ENCODE measurements at regions of chr22 and their contacts with region 1.

Region 1: DNA sequence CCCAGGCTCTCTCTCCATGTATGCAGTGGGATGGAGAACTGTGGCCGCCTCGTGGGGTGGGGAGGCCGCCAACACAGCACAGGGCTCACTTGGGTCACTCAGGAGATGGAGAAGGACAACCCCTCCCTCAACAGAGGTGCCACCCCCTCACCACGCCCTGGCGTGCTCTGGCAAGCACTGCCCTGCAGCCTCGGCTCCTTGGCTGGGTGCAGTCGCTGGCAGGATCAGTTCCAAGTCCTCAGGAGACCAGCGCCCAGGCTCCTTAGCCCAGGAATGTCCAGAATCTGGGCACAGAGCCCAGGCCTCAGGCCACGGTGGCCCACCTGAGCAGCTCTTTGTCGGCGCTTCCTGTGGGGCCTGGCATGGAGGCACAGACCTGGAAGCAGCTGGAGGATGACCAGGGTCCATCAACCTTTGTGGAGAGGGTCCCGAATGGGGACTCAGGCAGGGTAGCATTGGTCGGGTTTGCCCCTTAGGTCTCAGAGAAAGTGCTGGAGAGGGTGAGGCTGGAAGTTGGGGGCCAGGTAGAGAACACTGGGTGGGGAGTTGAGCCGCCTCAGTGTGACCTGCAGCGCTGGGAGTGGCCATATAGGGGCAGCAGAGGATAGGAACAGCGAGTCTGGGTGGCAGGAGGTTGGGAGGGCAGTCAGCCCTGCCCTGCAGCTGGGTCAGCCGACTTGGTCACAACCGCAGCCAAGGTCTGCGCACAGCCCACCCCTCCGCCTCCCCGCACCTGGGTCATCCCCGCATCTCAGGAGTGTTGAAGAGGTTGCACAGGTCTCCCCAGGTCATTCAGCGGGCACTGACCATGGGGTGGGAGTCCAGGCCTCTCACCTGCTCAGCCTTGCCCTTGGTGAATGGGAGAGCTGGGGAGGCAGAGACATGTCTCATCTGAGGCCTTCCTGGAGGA is 8.2 kb downstream of the SUSD2 start:
- DNase-seq: no peak
- ATAC-seq: peak; percentile 90
- H3K4me3 ChIP-seq: no peak overlapping the region
- H3K27ac ChIP-seq: peak overlapping the region; percentile 66
- H3K4me1 ChIP-seq: peaks cover 16% of the 10 kb centered on the region
- H3K27me3 ChIP-seq: no peaks in the 10 kb centered on the region
- CTCF ChIP-seq: peak; percentile 88

Region 2: DNA sequence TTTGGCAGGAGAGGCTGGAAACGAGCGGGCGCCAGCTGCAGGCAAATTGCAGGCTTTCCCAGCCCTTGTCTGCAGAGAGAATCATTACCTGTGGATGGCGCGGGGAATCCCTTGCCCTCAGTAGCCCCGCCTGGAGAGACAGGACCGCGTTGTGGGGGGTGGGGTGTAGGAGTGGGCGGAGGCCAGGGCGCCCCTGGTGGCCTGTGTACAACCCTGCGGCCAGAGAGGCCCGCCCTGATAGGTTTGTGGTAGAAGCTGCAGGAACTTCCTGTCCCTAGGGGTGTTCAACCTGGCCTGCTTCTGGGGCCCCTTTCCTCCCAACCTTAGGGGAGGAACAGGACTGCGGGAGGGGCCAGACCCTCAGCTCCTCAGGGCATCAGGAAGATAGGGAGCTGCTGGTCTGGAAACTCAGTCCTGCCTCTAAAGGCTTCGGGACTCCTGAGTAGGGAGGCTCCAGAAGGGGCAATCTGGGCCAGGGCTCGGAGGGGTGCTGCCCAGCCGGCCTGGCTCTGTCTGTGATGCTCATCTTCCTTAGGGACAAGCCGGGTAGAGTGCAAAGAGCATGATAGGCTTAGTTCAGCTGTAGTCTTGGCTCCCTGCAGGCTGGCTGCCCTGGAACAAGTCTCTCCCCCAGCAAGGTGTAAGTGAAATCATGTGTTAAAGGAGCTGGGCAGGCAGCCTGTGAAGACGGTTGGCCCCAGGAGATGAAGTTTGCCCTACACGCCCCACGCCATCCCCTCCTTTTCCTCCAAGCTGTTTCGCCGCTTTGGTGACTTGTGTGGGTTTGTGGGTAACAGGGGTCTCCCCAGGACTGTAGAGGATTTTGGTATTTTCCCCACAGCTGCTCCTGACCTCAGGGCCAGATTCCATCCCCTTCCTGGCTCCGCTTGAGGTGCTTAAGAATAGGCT is 32.3 kb before region 1 on chr22:
- CTCF ChIA-PET with region 1: no interaction called
- POLR2A ChIA-PET with region 1: no interaction called
- in situ Hi-C with region 1: no loop called
- intact Hi-C with region 1: no loop called
- DNase-seq: no peak
- ATAC-seq: peak; percentile 91
- H3K4me3 ChIP-seq: peak overlapping the region; percentile 59 to 71
- H3K27ac ChIP-seq: peak overlapping the region; percentile 77
- H3K4me1 ChIP-seq: peaks cover 26% of the 10 kb centered on the region
- H3K27me3 ChIP-seq: no peaks in the 10 kb centered on the region
- CTCF ChIP-seq: peak; percentile 88

Region 3: GRCh38 chr22:24225951-24226350 is 36.4 kb after region 1 on chr22:
- CTCF ChIA-PET with region 1: interaction called, 10 read pairs
- POLR2A ChIA-PET with region 1: no interaction called
- in situ Hi-C with region 1: no loop called
- intact Hi-C with region 1: no loop called
- DNase-seq: no peak
- ATAC-seq: no peak
- H3K4me3 ChIP-seq: no peak overlapping the region
- H3K27ac ChIP-seq: no peak overlapping the region
- H3K4me1 ChIP-seq: no peaks in the 10 kb centered on the region
- H3K27me3 ChIP-seq: no peaks in the 10 kb centered on the region
- CTCF ChIP-seq: no peak

Region 4: GRCh38 chr22:24247011-24247507 is 57.6 kb after region 1 on chr22:
- CTCF ChIA-PET with region 1: interaction called, 19 read pairs
- POLR2A ChIA-PET with region 1: no interaction called
- in situ Hi-C with region 1: no loop called
- intact Hi-C with region 1: loop called (anchors 2 kb)
- DNase-seq: no peak
- ATAC-seq: peak; percentile 33
- H3K4me3 ChIP-seq: no peak overlapping the region
- H3K27ac ChIP-seq: peak overlapping the region; percentile 80
- H3K4me1 ChIP-seq: peaks cover 18% of the 10 kb centered on the region
- H3K27me3 ChIP-seq: no peaks in the 10 kb centered on the region
- CTCF ChIP-seq: no peak

Measured in Panc1 (cell line).